Heart right ventricle (tissue), 16 donors: ENCODE measurements at regions of chr11 and their contacts with region 1.

Region 1: GRCh38 chr11:304915-305843 is 2.4 kb upstream of the IFITM2 start:
- DNase-seq: peak; percentile 58 to 79
- ATAC-seq: peak in 5 of 8 donors; percentile 11 to 34 (median 24)
- H3K4me3 ChIP-seq: peak overlapping the region in 1 of 10 donors; percentile 9
- H3K27ac ChIP-seq: peak overlapping the region in 6 of 10 donors; percentile 15 to 97 (median 87)
- H3K4me1 ChIP-seq: peaks cover 5 to 51% (median 25%) of the 10 kb centered on the region in 9 donors
- H3K27me3 ChIP-seq: peaks cover 0 to 25% (median 6%) of the 10 kb centered on the region in 7 donors
- CTCF ChIP-seq: peak; percentile 47 to 79 (median 67)

Region 2: GRCh38 chr11:236774-237767 is 68.1 kb before region 1 on chr11 and contains the start of gene PSMD13:
- intact Hi-C with region 1: loop called in 1 of 10 experiments (anchors 2 kb)
- DNase-seq: peak; percentile 87
- ATAC-seq: peak; percentile 92 to 98 (median 95)
- H3K4me3 ChIP-seq: peak within 1 kb of the TSS; percentile 76 to 98 (median 90)
- H3K27ac ChIP-seq: peak within 1 kb of the TSS; percentile 86 to 98 (median 94)
- H3K4me1 ChIP-seq: peaks cover 0 to 46% (median 32%) of the 10 kb centered on the region in 9 donors
- H3K27me3 ChIP-seq: no peaks in the 10 kb centered on the region
- CTCF ChIP-seq: no peak
- total RNA-seq, gene PSMD13: 78.7 to 110 (median 90.4) TPM

Region 3: DNA sequence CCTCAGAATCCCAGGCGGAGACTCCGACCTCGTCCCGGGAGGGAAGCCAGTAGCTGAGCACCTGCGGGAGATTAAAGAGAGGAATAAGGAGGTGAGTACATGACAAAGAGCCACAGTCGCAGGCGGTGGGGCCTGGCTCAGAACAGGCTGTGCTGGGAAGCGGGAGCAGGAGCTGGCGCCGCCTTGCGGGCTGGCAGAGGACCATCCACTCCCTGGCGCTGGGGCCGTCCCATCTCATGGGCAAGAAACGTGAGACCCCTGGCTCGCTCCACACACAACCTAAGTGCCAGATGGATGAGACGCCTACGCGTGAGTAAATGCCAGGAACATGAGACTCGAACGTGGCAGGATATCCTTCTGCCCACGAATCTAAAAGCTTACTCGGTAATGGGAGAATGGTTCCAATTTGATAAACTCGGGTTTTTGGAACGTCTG is 478.4 kb after region 1 on chr11:
- intact Hi-C with region 1: no loop called
- DNase-seq: peak; percentile 57 to 72
- ATAC-seq: peak; percentile 45 to 85 (median 80)
- H3K4me3 ChIP-seq: no peak overlapping the region
- H3K27ac ChIP-seq: peak overlapping the region in 4 of 10 donors; percentile 1 to 35 (median 12)
- H3K4me1 ChIP-seq: peaks cover 0 to 22% (median 14%) of the 10 kb centered on the region in 9 donors
- H3K27me3 ChIP-seq: peaks cover 0 to 11% (median under 1%) of the 10 kb centered on the region in 7 donors
- CTCF ChIP-seq: peak in 8 of 9 donors; percentile 21 to 72 (median 63)